ENCODE measurements at regions of chr7 and their contacts with region 1.

Region 1: DNA sequence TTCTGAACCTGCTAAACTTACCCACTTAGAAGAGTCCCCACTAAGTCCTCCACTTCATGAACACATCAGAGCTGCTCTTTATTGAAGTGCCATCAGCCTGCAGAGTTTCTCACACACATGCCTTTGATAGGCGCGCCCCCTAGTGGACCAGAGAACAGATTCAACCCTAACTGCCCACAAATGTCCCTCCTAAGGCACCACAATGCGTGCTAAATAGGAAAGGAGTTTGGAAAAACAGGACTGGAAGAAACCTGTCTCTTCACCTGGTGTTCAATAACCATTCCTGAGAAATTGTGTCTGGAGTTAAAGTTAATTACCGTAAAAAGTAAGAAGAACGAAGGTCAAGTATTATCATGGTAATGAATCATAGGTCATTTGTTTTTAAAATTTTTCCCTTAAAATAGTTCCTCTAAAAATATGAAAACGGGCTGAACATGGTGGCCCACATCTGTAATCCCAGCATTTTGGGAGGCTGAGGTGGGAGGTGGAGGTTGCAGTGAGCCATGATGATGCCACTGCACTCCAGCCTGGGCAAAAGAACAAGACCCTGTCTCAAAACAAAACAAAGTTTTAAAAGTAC is 249.7 kb downstream of the ELMO1 start:
- DNase-seq: peak; percentile 63 to 86
- H3K4me3 ChIP-seq: no peak overlapping the region
- H3K4me1 ChIP-seq: no peaks in the 10 kb centered on the region
- H3K27me3 ChIP-seq: no peaks in the 10 kb centered on the region

Region 2: DNA sequence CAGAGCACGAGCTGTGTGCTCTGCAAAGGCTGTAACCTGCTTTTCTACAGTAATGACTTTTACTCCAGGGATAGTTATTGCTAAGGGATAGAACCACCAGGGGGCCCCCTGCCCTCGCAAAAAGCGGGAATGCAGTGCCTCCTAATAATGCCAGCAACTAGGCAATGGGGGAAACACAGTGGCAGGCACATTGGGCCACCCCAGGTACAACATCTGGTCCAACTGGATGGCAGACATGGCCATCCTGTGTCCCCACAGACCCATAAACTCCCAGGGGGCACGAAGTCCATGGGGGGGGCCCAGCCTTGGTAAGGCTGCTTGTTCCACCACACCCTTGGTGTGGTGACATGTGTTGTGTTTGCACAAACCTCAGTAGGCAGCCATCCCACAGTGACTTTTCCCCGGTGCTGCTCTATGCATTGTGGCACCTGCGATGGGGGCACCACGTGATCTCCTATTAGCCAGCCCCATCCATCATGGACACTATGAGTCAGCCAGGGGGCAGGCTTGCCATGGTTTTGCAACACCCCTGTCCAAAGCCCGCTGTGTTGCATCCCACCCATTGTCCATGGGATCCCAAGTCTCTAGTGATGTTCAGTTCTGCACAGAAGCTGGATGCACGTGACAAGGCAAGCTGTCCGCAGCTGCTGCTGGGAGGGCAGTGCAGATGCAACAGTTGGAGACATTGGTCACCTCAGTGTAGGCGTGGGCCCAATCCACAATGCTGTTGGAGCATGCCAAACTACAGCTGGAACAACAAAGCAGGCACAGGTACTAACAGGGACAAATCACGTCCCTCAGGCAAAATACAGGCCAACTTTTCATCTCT is 725.3 kb before region 1 on chr7:
- in situ Hi-C with region 1: loop called (anchors 5 kb)
- DNase-seq: peak; percentile 49 to 81
- H3K4me3 ChIP-seq: no peak overlapping the region
- H3K4me1 ChIP-seq: no peaks in the 10 kb centered on the region
- H3K27me3 ChIP-seq: no peaks in the 10 kb centered on the region

Region 3: GRCh38 chr7:36496576-36496975 is 702.4 kb before region 1 on chr7:
- in situ Hi-C with region 1: no loop called
- DNase-seq: no peak
- H3K4me3 ChIP-seq: no peak overlapping the region
- H3K4me1 ChIP-seq: no peaks in the 10 kb centered on the region
- H3K27me3 ChIP-seq: peaks cover 6% of the 10 kb centered on the region; the same call in 1 of the 2 replicates

Region 4: GRCh38 chr7:36591636-36592035 is 607.4 kb before region 1 on chr7:
- in situ Hi-C with region 1: no loop called
- DNase-seq: no peak
- H3K4me3 ChIP-seq: no peak overlapping the region
- H3K4me1 ChIP-seq: no peaks in the 10 kb centered on the region
- H3K27me3 ChIP-seq: peaks cover 4% of the 10 kb centered on the region

Region 5: GRCh38 chr7:36686499-36686898 is 512.5 kb before region 1 on chr7:
- in situ Hi-C with region 1: loop called (anchors 25 kb)
- DNase-seq: no peak
- H3K4me3 ChIP-seq: no peak overlapping the region
- H3K4me1 ChIP-seq: no peaks in the 10 kb centered on the region
- H3K27me3 ChIP-seq: no peaks in the 10 kb centered on the region

Region 6: DNA sequence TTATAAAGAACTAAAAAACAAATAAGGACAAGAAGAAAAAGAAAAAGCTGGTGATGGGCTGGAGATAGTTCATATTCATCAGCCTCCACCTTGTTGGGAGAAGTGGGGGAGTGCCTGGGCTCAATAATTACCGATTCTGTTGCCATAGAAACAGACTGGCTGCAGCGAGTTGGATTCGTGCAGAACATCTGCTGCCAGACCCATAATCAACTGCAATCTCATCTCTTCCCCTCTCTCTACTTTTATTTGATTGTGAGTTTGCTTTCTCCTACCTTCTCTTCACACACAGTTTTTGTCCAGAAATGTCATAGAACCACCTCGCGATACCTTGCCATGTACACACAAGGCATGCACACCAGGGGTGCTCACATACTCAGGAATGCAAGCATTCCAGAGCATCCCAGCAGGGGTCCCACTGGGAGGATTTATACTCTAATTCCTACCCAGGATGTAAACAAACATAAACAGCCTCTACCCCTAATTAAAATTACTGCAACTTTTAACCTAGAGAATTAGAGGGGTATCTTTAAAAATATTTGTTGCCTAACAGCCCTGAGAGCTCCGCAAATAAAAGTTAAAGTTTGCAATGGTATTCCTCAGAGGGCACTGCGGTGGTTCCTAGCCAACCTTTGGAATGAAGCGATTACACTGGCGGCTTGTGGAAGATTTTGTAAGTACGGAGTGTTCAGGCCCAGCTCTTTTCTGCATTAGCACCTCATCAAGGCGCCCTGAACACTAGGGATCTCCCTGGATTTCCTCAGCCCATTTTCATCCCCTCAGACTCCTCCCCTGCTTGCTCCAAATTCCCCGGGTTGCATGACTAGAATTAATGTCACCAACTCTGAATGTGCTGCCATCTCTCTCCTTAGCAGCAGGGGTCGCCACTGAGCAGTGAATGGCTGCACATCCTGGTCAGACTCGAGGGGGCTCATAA is 212.3 kb before region 1 on chr7:
- in situ Hi-C with region 1: loop called (anchors 25 kb)
- DNase-seq: peak; percentile 46 to 82
- H3K4me3 ChIP-seq: no peak overlapping the region
- H3K4me1 ChIP-seq: no peaks in the 10 kb centered on the region
- H3K27me3 ChIP-seq: peaks cover 6% of the 10 kb centered on the region

Region 7: GRCh38 chr7:37007268-37007667 is 191.7 kb before region 1 on chr7:
- in situ Hi-C with region 1: no loop called
- DNase-seq: no peak
- H3K4me3 ChIP-seq: no peak overlapping the region
- H3K4me1 ChIP-seq: no peaks in the 10 kb centered on the region
- H3K27me3 ChIP-seq: no peaks in the 10 kb centered on the region

Measured in HAP-1 (cell line).